Heart left ventricle (tissue), 16 donors: ENCODE measurements at regions of chr7 and their contacts with region 1.

Region 1: GRCh38 chr7:87806150-87806549 is 70.0 kb downstream of the SLC25A40 start:
- DNase-seq: no peak
- ATAC-seq: no peak
- H3K4me3 ChIP-seq: no peak overlapping the region
- H3K27ac ChIP-seq: no peak overlapping the region
- H3K4me1 ChIP-seq: no peaks in the 10 kb centered on the region
- H3K27me3 ChIP-seq: no peaks in the 10 kb centered on the region
- CTCF ChIP-seq: no peak
- POLR2A ChIP-seq: no peak

Region 2: DNA sequence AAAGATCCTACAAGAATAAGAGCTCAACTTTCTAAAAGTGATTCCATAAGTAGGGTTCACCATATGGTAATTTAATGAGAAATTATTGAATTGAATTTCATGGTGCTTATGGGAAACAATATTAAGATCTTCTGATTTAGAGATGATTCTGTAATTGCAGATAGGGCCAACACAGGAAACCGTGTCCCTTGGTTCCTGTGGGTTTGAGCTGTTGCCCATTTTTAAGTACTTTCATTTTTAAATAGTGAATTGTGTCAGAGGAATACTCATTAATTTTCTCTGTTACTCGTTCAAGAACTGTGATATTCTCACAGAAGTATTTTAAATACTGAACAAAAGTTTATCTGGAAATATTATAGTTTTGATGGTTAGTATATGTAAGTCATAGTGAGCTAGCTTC is 284.5 kb after region 1 on chr7:
- intact Hi-C with region 1: loop called in 1 of 10 experiments (anchors 10 kb)
- DNase-seq: no peak
- ATAC-seq: peak in 2 of 4 donors; percentile 45 to 54
- H3K4me3 ChIP-seq: peak overlapping the region in 3 of 12 donors; percentile 12 to 36 (median 32)
- H3K27ac ChIP-seq: peak overlapping the region in 6 of 12 donors; percentile 1 to 65 (median 11)
- H3K4me1 ChIP-seq: peaks cover 0 to 19% (median 12%) of the 10 kb centered on the region in 12 donors
- H3K27me3 ChIP-seq: no peaks in the 10 kb centered on the region
- CTCF ChIP-seq: no peak
- POLR2A ChIP-seq: no peak

Region 3: GRCh38 chr7:88111136-88111743 is 305.1 kb after region 1 on chr7:
- intact Hi-C with region 1: loop called in 3 of 10 experiments (anchors 5 to 10 kb)
- DNase-seq: no peak
- ATAC-seq: peak in 1 of 4 donors; percentile 53
- H3K4me3 ChIP-seq: no peak overlapping the region
- H3K27ac ChIP-seq: no peak overlapping the region
- H3K4me1 ChIP-seq: peaks cover 0 to 13% (median 2%) of the 10 kb centered on the region in 12 donors
- H3K27me3 ChIP-seq: no peaks in the 10 kb centered on the region
- CTCF ChIP-seq: peak; percentile 36 to 76 (median 62)
- POLR2A ChIP-seq: no peak